ENCODE measurements at regions of chr11 and their contacts with region 1.

Region 1: GRCh38 chr11:70195392-70195791 is 7.7 kb upstream of the FADD start:
- DNase-seq: no peak
- ATAC-seq: no peak
- H3K4me3 Mint-ChIP-seq: no peak overlapping the region
- H3K27ac Mint-ChIP-seq: no peak overlapping the region
- H3K4me1 Mint-ChIP-seq: peaks cover 5% of the 10 kb centered on the region
- H3K27me3 Mint-ChIP-seq: peaks cover 6% of the 10 kb centered on the region

Region 2: GRCh38 chr11:69909561-69910496 is 285.6 kb before region 1 on chr11:
- CTCF ChIA-PET with region 1: interaction called, 17 read pairs
- DNase-seq: no peak
- ATAC-seq: peak; percentile 30
- H3K4me3 Mint-ChIP-seq: no peak overlapping the region
- H3K27ac Mint-ChIP-seq: no peak overlapping the region
- H3K4me1 Mint-ChIP-seq: no peaks in the 10 kb centered on the region
- H3K27me3 Mint-ChIP-seq: peaks cover 3% of the 10 kb centered on the region

Region 3: GRCh38 chr11:69918938-69919650 is 276.3 kb before region 1 on chr11:
- CTCF ChIA-PET with region 1: interaction called, 17 read pairs
- DNase-seq: peak; percentile 73
- ATAC-seq: peak; percentile 75
- H3K4me3 Mint-ChIP-seq: no peak overlapping the region
- H3K27ac Mint-ChIP-seq: no peak overlapping the region
- H3K4me1 Mint-ChIP-seq: no peaks in the 10 kb centered on the region
- H3K27me3 Mint-ChIP-seq: no peaks in the 10 kb centered on the region

Measured in activated CD8-positive, alpha-beta memory T cell treated with anti-CD3 and anti-CD28 coated beads, Interleukin-2, amount 10 ng/mL, durations not matched to agents 7 days and 5 days (primary cell).